ENCODE measurements at regions of chr1 and their contacts with region 1.

Region 1: DNA sequence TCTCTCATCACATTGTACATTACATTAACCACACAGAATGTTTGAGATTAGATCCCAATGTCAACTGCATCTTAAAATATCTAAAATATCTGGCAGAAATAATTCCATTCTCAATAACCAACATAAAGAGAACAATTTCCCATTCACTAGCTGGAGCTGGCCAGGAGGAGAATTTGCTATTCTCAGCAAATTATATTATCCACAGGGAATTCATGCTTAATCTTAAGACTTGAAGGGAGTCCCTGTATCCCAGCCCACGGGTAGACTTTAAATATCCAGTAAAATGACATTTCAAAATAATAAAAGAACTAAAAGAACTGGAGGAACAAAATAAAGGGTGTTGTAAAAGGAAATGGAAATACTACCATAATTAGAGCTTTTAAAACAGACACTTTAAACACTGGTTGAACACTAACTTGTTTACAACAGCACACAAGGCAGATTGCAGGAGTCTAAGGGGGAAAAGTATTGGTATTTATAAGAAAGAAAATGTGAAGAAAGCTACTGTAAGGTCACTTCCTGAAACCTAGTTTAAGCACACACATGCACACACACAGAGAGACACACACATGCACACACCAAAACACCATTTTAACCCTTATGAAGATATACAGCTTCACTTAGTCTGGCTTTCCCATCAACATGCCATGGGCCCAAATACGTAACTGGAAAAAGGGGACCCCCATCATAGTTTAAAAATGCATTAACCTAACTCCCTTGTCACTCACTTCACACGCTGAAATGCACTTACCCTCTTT is 107.0 kb downstream of the PTPN14 start:
- DNase-seq: no peak
- ATAC-seq: no peak
- H3K4me3 Mint-ChIP-seq: no peak overlapping the region
- H3K27ac Mint-ChIP-seq: peak overlapping the region; percentile 82
- H3K4me1 Mint-ChIP-seq: peaks cover 92% of the 10 kb centered on the region
- H3K27me3 Mint-ChIP-seq: no peaks in the 10 kb centered on the region
- CTCF ChIP-seq: no peak

Region 2: DNA sequence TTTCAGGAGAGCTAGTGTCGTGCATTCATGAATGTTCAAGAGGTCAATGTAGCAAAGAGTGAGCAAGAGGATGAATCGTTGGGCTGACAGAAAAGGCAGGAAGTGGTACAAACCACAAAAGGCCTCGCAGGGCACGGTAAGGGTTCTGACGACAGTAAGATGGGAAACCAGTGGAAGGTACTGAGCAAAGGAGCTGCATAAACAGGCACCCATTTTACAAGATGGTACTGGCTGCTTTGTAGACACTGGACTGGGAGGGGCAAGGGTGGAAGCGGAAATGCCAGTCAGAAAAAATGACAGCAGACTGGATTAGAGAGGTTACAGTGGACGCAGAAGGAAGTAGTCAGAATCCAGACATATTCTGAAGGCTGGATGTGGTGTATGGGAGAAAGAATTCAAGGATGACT is 16.5 kb before region 1 on chr1:
- CTCF ChIA-PET with region 1: no interaction called
- POLR2A ChIA-PET with region 1: interaction called, 10 read pairs
- DNase-seq: no peak
- ATAC-seq: peak; percentile 74
- H3K4me3 Mint-ChIP-seq: no peak overlapping the region
- H3K27ac Mint-ChIP-seq: peak overlapping the region; percentile 43
- H3K4me1 Mint-ChIP-seq: peaks cover 51% of the 10 kb centered on the region
- H3K27me3 Mint-ChIP-seq: no peaks in the 10 kb centered on the region
- CTCF ChIP-seq: no peak

Region 3: DNA sequence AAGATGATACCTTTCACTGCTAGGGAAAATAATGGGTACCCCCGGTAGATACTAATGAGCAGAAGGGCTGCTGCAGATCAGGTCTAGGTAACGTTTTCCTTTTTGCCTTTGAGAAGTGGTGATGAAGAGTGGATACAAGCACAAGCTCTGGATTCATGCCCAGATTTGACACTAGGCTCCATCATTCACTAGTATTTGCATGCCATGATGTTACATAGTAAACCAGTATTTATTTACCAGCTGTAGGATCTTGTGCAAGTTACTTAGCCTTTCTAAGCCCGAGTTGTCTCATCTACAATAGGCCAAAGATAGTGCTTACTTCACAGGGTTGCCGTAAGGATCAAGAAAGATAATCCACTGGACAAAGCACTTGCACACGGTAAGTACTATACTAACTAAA is 92.9 kb after region 1 on chr1:
- CTCF ChIA-PET with region 1: no interaction called
- POLR2A ChIA-PET with region 1: no interaction called
- DNase-seq: no peak
- ATAC-seq: no peak
- H3K4me3 Mint-ChIP-seq: no peak overlapping the region
- H3K27ac Mint-ChIP-seq: no peak overlapping the region
- H3K4me1 Mint-ChIP-seq: peaks cover 40% of the 10 kb centered on the region
- H3K27me3 Mint-ChIP-seq: no peaks in the 10 kb centered on the region
- CTCF ChIP-seq: no peak

Measured in WTC11 (cell line).